ENCODE measurements at regions of chr18 and their contacts with region 1.

Region 1: DNA sequence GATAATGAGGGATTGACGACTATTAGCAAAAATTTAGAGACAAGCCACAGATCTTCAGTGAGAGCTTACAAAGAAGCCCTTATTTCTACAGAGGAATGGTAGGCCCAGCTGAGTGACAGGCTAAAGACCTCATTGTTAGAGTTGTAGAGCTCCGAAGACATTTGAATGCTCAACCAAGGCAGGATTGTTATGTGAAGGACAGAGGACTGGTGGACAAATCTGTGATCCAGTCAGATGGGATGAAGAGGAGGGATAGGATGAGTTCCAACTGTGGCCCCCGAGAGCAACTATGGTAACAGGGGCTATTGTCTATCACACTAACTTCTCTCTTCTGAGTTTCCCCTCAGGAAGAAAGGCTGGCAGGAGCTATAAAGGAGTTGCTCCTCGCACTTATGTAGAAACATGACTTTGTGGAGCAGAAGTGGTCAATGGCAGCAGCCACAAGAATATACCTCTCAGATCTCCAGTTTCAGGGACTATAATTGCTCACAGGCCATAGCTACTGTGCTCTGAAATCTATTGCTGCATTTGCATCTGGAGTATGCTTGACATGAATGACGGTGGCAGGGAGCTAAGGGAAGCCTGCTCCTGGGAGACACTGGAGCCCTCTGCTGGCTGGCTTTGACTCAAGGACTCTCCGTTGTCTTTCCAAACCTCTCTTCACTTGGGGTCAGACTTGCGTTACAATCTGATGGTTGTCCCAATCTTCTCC is 50.3 kb upstream of the GREB1L start:
- DNase-seq: peak; percentile 34
- H3K4me3 ChIP-seq: no peak overlapping the region
- H3K27ac ChIP-seq: no peak overlapping the region
- H3K4me1 ChIP-seq: peaks cover 6% of the 10 kb centered on the region
- H3K27me3 ChIP-seq: no peaks in the 10 kb centered on the region
- CTCF ChIP-seq: peak; percentile 65 to 84

Region 2: DNA sequence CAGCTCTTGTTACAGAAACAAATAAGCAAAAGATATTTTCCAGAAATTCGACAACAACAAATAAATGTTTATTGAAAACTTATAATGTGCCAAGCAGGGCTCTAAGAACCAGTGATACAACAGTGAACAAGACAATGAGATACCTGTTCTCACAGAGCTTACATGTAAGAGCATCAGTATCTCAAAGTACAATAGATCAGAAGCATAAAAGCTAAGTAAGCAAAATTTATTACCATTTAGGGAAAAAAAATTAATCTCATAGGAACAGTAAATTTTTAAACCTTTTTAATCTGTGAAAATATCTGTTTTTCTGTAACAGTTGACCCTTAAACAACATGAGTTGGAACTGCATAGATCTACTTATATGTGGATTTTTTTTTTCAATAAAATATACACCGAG is 101.1 kb before region 1 on chr18:
- CTCF ChIA-PET with region 1: no interaction called
- dilution Hi-C with region 1: no loop called
- in situ Hi-C with region 1: no loop called
- intact Hi-C with region 1: no loop called
- DNase-seq: no peak
- H3K4me3 ChIP-seq: no peak overlapping the region
- H3K27ac ChIP-seq: no peak overlapping the region
- H3K4me1 ChIP-seq: no peaks in the 10 kb centered on the region
- H3K27me3 ChIP-seq: no peaks in the 10 kb centered on the region
- CTCF ChIP-seq: no peak

Region 3: GRCh38 chr18:21203096-21203495 is 11.3 kb after region 1 on chr18:
- CTCF ChIA-PET with region 1: no interaction called
- dilution Hi-C with region 1: no loop called
- in situ Hi-C with region 1: no loop called
- intact Hi-C with region 1: no loop called
- DNase-seq: peak; percentile 9
- H3K4me3 ChIP-seq: no peak overlapping the region
- H3K27ac ChIP-seq: no peak overlapping the region
- H3K4me1 ChIP-seq: no peaks in the 10 kb centered on the region
- H3K27me3 ChIP-seq: peaks cover 2% of the 10 kb centered on the region
- CTCF ChIP-seq: no peak

Region 4: DNA sequence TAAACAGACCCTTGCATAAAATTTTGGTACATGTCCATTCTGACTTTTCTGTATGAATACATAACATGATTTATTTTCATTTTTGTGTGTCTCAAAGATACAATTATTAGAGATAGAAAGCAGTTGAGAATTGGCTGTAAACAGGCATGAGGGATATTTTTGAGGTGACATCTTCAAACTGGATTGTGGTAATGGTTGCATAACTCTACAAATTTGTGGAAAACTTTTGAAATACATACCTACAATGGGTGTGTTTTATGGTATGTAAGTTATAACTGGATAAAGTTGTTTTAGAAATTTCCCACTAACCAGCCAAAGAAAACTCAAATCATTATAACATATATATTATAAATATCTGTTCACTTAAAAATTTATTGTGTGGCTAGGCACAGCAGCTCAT is 89.9 kb after region 1 on chr18:
- CTCF ChIA-PET with region 1: no interaction called
- dilution Hi-C with region 1: loop called (anchors 5 kb)
- in situ Hi-C with region 1: no loop called
- intact Hi-C with region 1: no loop called
- DNase-seq: no peak
- H3K4me3 ChIP-seq: no peak overlapping the region
- H3K27ac ChIP-seq: no peak overlapping the region
- H3K4me1 ChIP-seq: no peaks in the 10 kb centered on the region
- H3K27me3 ChIP-seq: peaks cover 3% of the 10 kb centered on the region
- CTCF ChIP-seq: no peak

Region 5: GRCh38 chr18:21341141-21341540 is 149.4 kb after region 1 on chr18:
- CTCF ChIA-PET with region 1: no interaction called
- dilution Hi-C with region 1: no loop called
- in situ Hi-C with region 1: no loop called
- intact Hi-C with region 1: no loop called
- DNase-seq: peak; percentile 76
- H3K4me3 ChIP-seq: no peak overlapping the region
- H3K27ac ChIP-seq: no peak overlapping the region
- H3K4me1 ChIP-seq: peaks cover 5% of the 10 kb centered on the region
- H3K27me3 ChIP-seq: peaks cover 2% of the 10 kb centered on the region
- CTCF ChIP-seq: no peak

Region 6: DNA sequence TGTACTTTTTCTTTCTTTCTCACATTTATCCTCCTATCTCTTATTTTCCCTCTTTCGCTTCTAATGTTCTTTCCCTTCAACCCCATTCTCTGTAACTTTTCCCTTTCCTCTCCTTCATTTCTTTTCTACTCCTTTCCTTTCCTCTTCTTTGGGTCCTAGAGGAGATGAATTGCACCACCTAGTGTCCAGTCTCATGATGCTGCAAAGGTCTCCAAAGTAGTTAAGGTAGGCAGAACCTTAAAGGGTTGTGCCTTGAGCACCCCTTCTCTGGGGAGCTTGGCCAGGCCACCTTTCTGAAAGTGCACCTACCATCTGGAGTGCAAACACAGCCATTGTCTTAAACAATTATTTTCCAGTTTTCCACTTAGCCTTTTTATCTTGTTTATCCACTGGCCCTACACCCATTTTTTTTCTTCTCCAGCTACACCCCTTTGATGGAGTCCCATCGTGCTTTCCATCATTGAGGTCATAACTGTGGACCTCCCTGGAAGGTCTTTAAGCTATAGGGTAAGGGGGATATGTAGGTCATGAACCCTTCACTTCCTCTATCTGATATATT is 252.8 kb after region 1 on chr18:
- CTCF ChIA-PET with region 1: interaction called, 4 read pairs
- dilution Hi-C with region 1: no loop called
- in situ Hi-C with region 1: loop called in 1 of 2 experiments (anchors 5 kb)
- intact Hi-C with region 1: loop called (anchors 1 kb)
- DNase-seq: peak; percentile 48
- H3K4me3 ChIP-seq: no peak overlapping the region
- H3K27ac ChIP-seq: no peak overlapping the region
- H3K4me1 ChIP-seq: peaks cover 3% of the 10 kb centered on the region
- H3K27me3 ChIP-seq: no peaks in the 10 kb centered on the region
- CTCF ChIP-seq: peak; percentile 81 to 87

Region 7: DNA sequence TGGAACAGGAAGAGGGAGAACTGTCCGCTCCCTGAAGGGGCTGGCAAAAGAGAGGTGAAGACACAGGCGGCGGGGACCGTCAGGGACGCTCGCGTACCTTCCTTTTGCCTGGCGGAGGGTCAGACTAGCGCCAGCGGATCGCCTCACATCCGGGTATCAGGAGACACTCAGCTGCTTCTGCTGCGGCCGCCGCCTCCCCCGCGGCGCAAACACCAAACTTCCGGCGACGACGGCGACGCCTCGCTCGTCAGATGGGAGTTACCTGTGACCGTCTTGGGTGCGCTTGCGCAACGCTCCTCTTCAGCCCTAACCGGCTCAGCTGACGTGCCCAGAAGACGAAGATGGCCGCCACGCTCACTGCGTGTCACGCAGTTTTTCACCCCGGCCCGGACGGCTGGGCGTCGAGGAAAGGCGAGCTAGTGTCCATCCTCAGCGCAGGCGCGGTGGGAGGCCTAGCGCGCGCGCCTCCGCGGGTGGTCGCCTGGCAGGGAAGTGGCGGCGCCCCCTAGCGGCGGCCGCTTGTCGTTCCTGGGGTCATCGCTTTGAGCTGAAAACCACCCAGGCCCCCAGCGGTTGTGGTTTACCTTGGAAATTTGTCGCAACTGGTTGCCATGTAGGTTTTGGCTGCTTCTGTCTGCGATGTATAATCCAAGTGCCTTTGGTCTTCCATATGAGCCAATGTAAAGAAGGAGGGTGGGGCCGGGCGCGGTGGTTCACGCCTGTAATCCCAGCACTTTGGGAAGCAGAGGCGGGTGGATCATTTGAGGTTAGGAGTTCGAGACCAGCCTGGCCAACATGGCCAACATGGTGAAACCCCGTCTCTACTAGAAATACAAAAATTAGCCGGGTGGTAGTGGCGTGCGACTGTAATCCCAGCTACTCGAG is 409.0 kb after region 1 on chr18 and contains the start of gene ESCO1:
- CTCF ChIA-PET with region 1: no interaction called
- dilution Hi-C with region 1: no loop called
- in situ Hi-C with region 1: no loop called
- intact Hi-C with region 1: loop called (anchors 1 kb)
- DNase-seq: peak; percentile 99
- H3K4me3 ChIP-seq: peak within 1 kb of the TSS; percentile 62 to 99 (median 96)
- H3K27ac ChIP-seq: peak within 1 kb of the TSS; percentile 91
- H3K4me1 ChIP-seq: peaks cover 5% of the 10 kb centered on the region
- H3K27me3 ChIP-seq: no peaks in the 10 kb centered on the region
- CTCF ChIP-seq: peak; percentile 79 to 89
- total RNA-seq, gene ESCO1: 14.9 to 16.2 TPM

Measured in mammary epithelial cell (primary cell).